Aorta (tissue), 5 donors: ENCODE measurements at regions of chr7 and their contacts with region 1.

Region 1: DNA sequence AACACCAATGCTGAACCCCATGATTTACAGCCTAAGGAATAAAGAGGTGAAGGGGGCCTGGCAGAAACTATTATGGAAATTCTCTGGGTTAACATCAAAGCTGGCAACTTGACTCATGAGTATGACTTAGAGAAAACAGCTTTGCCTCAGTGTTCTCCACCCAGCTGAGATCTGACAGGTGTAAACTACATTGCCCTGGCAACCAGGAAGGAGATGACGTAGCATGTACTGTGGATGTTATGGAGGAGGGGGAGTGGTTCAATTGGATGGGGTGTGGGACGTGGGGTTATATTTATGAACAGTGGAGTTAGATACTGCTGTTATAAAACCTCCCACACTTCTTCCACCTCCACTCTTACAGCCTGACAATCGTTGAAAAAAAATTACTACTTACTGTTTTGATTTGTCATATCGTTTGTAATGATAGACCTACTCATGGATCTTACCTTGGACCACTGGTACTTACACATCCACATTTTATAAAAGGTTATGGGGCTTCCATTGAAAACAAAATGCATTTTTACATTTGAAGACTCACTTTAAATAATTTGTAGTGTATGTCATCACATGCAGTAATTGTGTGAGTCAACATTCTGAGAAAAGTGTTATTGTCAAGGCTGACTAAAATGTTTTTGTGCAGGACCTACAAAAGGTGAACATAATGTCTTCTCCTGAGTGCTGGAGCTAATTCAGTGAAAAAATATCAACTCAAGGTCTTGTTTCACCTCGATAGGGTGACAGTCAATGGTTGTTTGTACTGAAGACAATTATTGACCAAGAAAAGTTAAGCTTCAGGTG is 6.4 kb downstream of the OR2F1 start:
- DNase-seq: no peak
- ATAC-seq: no peak
- H3K4me3 ChIP-seq: no peak overlapping the region
- H3K27ac ChIP-seq: no peak overlapping the region
- H3K4me1 ChIP-seq: no peaks in the 10 kb centered on the region
- H3K27me3 ChIP-seq: no peaks in the 10 kb centered on the region

Region 2: GRCh38 chr7:143992670-143993069 is 31.7 kb after region 1 on chr7:
- intact Hi-C with region 1: no loop called
- DNase-seq: no peak
- ATAC-seq: no peak
- H3K4me3 ChIP-seq: no peak overlapping the region
- H3K27ac ChIP-seq: no peak overlapping the region
- H3K4me1 ChIP-seq: no peaks in the 10 kb centered on the region
- H3K27me3 ChIP-seq: no peaks in the 10 kb centered on the region

Region 3: DNA sequence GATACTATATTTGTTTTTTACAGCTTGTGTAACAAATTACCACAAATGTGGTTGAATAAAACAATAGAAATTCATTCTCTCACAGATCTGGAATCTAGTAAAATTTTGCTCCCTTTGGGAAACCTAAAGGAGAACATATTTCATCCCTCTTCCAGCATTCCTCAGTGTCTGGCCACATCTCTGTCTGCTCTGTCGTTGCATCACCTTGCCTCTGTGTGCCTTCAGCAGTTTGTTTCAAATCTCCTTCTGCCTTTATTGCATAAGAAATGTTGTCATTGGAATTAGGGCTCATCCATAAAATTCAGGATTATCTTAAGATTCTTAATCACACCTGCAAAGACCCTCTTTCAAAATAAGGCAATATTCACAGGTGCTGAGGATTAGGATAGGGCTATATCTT is 176.5 kb after region 1 on chr7:
- intact Hi-C with region 1: loop called in 1 of 2 experiments (anchors 10 kb)
- DNase-seq: no peak
- ATAC-seq: no peak
- H3K4me3 ChIP-seq: no peak overlapping the region
- H3K27ac ChIP-seq: no peak overlapping the region
- H3K4me1 ChIP-seq: no peaks in the 10 kb centered on the region
- H3K27me3 ChIP-seq: no peaks in the 10 kb centered on the region